ENCODE measurements at regions of chr6 and their contacts with region 1.

Region 1: DNA sequence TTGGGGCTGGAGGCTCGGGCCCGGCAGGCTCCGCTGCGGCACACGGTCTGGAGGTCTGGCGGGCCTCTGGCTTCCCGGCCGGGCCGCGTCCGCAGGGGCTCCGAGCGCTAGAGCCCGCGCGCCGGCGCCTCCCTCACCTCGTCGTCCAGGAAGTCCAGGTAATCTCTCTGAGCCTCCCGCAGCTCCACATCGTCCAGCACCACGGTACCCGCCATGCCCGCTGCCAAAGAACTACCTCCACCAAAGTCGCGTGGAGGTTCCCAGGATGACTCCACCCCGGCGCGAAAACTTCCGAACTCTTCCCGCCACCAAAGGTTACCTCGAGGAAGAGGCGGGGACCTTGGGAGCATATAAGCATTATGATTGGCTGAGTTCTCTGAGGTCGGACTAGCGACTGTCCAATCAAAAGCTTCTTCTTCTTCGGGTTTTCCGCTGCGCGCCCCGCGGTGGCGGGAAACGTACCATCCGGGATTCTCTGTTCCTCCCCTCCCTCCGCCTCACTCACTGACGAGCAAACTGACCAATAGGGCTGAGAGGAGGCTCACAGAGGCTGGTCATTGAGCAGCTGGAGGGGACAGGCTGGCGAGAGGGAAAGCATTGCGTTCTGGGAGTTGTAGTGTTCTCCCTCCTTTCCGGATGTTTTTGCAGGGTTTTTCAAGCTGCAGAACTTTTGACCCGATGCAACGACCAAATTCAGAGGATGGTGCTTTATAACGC is at the start of gene MCM3:
- DNase-seq: peak; percentile 100
- ATAC-seq: peak; percentile 96
- H3K4me3 ChIP-seq: peak within 1 kb of the TSS; percentile 79
- H3K27ac ChIP-seq: peak within 1 kb of the TSS; percentile 81
- H3K4me1 ChIP-seq: peaks cover 8% of the 10 kb centered on the region; the same call in 1 of the 2 replicates
- H3K27me3 ChIP-seq: no peaks in the 10 kb centered on the region
- CTCF ChIP-seq: peak; percentile 1 to 26 (median 3); a peak in 2 of 6 replicates
- EP300 ChIP-seq: no peak
- POLR2A ChIP-seq: peak; percentile 88
- RAD21 ChIP-seq: no peak
- polyA plus RNA-seq, gene MCM3: 74.1 to 96.3 TPM

Region 2: DNA sequence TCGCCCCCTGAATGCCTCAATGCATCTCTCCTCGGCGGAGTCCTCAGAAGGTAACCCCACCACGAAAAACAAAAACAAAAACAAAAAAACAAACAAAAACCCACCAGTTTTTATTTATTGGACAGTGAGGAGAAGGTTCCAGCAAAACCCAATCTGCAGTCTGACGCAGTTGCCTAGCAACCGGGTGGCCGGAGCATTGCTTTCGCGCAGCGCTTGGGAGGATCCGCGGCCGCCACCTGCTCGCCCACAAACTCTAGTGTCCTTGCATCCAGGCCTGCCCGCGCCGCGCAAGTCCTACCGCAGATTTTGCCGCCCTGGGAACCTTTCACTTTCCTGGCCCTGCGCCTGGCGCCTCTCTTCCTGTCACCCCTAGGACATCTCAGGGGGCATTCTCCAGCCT is 1448.4 kb before region 1 on chr6:
- CTCF ChIA-PET with region 1: no interaction called
- POLR2A ChIA-PET with region 1: no interaction called
- RAD21 ChIA-PET with region 1: no interaction called
- SMC1A ChIA-PET with region 1: no interaction called
- in situ Hi-C with region 1: no loop called
- intact Hi-C with region 1: no loop called
- DNase-seq: no peak
- ATAC-seq: no peak
- H3K4me3 ChIP-seq: no peak overlapping the region
- H3K27ac ChIP-seq: no peak overlapping the region
- H3K4me1 ChIP-seq: no peaks in the 10 kb centered on the region
- H3K27me3 ChIP-seq: peaks cover 0 to 10% of the 10 kb centered on the region in 2 experiments; a peak in 1 of 4 replicates
- CTCF ChIP-seq: no peak
- EP300 ChIP-seq: no peak
- POLR2A ChIP-seq: no peak
- RAD21 ChIP-seq: no peak

Region 3: GRCh38 chr6:51147756-51148155 is 1136.9 kb before region 1 on chr6:
- CTCF ChIA-PET with region 1: no interaction called
- POLR2A ChIA-PET with region 1: no interaction called
- RAD21 ChIA-PET with region 1: no interaction called
- SMC1A ChIA-PET with region 1: no interaction called
- in situ Hi-C with region 1: no loop called
- intact Hi-C with region 1: no loop called
- DNase-seq: no peak
- ATAC-seq: no peak
- H3K4me3 ChIP-seq: no peak overlapping the region
- H3K27ac ChIP-seq: no peak overlapping the region
- H3K4me1 ChIP-seq: no peaks in the 10 kb centered on the region
- H3K27me3 ChIP-seq: no peaks in the 10 kb centered on the region
- CTCF ChIP-seq: no peak
- EP300 ChIP-seq: no peak
- POLR2A ChIP-seq: no peak
- RAD21 ChIP-seq: no peak

Region 4: GRCh38 chr6:52009466-52010140 is 275.0 kb before region 1 on chr6:
- CTCF ChIA-PET with region 1: no interaction called
- POLR2A ChIA-PET with region 1: no interaction called
- RAD21 ChIA-PET with region 1: no interaction called
- SMC1A ChIA-PET with region 1: no interaction called
- in situ Hi-C with region 1: no loop called
- intact Hi-C with region 1: no loop called
- DNase-seq: no peak
- ATAC-seq: no peak
- H3K4me3 ChIP-seq: no peak overlapping the region
- H3K27ac ChIP-seq: no peak overlapping the region
- H3K4me1 ChIP-seq: no peaks in the 10 kb centered on the region
- H3K27me3 ChIP-seq: no peaks in the 10 kb centered on the region
- CTCF ChIP-seq: no peak
- EP300 ChIP-seq: no peak
- POLR2A ChIP-seq: no peak
- RAD21 ChIP-seq: no peak

Region 5: DNA sequence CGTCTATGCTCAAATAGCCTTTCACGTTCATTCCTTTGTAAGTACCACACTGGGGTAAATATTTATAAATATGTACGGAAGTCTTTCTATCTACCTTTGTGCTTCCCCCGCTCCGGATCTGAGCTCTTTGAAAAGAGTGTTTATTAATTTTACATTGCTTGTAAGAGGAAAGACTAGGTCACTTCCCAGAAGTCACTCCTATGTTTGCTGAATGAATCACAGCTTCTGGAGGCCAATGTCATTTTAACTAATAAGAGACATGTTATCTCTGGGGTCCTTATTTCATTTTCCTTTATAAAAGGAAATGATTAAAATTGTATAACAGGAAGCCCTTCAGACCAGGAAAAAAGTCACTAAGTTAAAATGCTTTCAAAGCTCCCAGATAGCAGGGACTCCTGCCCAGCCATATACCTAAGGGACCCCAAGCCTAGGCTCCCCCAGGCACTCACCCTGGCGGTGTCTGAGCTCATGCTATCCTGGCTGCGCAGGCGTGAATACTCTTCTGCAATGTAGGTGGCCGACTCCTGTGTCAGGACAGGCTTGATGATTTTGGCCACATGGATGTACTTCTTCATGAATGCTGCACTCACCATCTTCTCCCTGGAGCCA is 12.7 kb before region 1 on chr6:
- CTCF ChIA-PET with region 1: interaction called, 7 read pairs
- POLR2A ChIA-PET with region 1: interaction called, 5 read pairs
- RAD21 ChIA-PET with region 1: interaction called, 3 read pairs
- SMC1A ChIA-PET with region 1: interaction called, 11 read pairs
- in situ Hi-C with region 1: no loop called
- intact Hi-C with region 1: no loop called
- DNase-seq: no peak
- ATAC-seq: no peak
- H3K4me3 ChIP-seq: no peak overlapping the region
- H3K27ac ChIP-seq: no peak overlapping the region
- H3K4me1 ChIP-seq: no peaks in the 10 kb centered on the region
- H3K27me3 ChIP-seq: no peaks in the 10 kb centered on the region
- CTCF ChIP-seq: no peak
- EP300 ChIP-seq: no peak
- POLR2A ChIP-seq: no peak; the same call in 1 of the 2 replicates
- RAD21 ChIP-seq: no peak

Region 6: DNA sequence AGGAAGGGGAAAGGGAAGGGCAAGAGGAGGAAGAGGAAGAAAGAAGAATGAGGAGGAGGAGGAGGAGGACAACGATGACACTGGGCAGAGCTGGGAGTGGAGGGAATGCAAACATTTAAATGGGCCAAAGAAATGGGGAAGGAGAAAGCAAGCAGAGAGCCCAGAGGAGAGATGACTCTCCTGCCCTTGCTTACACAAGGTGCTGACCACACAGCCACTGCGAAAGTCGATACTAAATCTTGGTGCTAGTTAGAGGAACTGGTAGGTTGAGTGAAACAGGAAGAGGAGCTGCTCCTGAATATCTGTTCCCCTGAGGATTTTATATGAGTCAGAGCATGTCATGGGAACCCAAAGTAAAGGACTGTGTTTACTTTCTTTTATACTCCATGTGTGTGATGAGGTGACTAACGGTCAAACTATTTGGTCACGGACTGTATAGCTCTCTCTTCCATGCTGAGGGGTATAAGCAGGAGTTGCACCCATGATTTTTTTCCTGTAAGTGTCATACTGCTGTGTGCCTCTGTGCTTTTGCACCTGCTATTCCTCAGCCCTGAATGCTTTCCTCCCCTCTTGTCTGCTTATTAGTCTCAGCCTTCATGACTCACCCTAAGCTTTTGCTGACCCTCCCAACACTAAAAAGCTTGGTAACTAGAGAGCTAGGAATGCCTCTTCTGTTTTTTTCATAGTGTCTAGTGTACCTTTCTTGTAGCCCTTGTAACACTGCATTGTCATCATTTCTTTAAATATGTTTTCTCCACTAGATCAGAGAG is 67.8 kb after region 1 on chr6:
- CTCF ChIA-PET with region 1: interaction called, 29 read pairs
- POLR2A ChIA-PET with region 1: interaction called, 4 read pairs
- RAD21 ChIA-PET with region 1: interaction called, 24 read pairs
- SMC1A ChIA-PET with region 1: interaction called, 29 read pairs
- in situ Hi-C with region 1: no loop called
- intact Hi-C with region 1: no loop called
- DNase-seq: peak; percentile 79
- ATAC-seq: peak; percentile 93
- H3K4me3 ChIP-seq: no peak overlapping the region
- H3K27ac ChIP-seq: peak overlapping the region; percentile 6; the same call in 1 of the 2 replicates
- H3K4me1 ChIP-seq: peaks cover 32% of the 10 kb centered on the region
- H3K27me3 ChIP-seq: no peaks in the 10 kb centered on the region
- CTCF ChIP-seq: no peak
- EP300 ChIP-seq: peak; percentile 22 to 66; a peak in 1 of 4 replicates
- POLR2A ChIP-seq: no peak
- RAD21 ChIP-seq: no peak

Region 7: DNA sequence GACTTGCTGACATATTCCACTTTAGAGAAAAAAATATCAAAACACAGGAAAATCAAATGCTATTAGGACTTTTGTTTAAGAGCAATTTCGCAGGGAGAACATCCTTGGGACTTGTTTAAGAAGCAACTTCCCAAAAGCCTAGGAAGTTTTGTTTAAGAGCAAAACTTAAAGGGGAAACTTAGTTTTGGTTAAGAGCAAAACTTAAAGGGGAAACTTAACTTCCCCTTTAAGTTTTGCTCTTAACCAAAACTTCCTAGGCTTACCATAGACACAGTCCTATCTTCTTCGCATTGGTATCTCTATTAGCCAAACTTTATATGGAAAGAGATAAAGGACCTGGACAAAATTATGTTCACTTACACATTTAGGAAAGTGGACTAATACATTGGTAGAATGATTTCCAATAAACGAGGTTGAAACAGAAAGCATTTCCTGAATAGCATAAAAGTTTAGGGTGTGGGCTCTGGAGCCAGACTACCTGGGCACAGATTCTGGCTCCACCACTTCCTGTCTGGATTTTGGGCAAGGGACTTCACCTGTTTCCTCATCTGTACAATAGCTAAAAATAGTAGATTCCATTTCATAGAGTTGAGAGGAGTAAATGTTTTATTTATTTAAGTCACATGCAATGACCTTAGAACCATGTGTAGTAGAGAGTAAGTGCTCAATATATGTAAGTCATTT is 93.1 kb after region 1 on chr6:
- CTCF ChIA-PET with region 1: interaction called, 13 read pairs
- POLR2A ChIA-PET with region 1: interaction called, 4 read pairs
- RAD21 ChIA-PET with region 1: interaction called, 4 read pairs
- SMC1A ChIA-PET with region 1: interaction called, 24 read pairs
- in situ Hi-C with region 1: no loop called
- intact Hi-C with region 1: no loop called
- DNase-seq: no peak
- ATAC-seq: peak; percentile 67
- H3K4me3 ChIP-seq: peak overlapping the region; percentile 3; the same call in 1 of the 2 replicates
- H3K27ac ChIP-seq: peak overlapping the region; percentile 24; the same call in 1 of the 2 replicates
- H3K4me1 ChIP-seq: peaks cover 26% of the 10 kb centered on the region
- H3K27me3 ChIP-seq: no peaks in the 10 kb centered on the region
- CTCF ChIP-seq: no peak
- EP300 ChIP-seq: no peak
- POLR2A ChIP-seq: no peak
- RAD21 ChIP-seq: no peak

Region 8: GRCh38 chr6:52407467-52407866 is 122.8 kb after region 1 on chr6:
- CTCF ChIA-PET with region 1: interaction called, 441 read pairs
- POLR2A ChIA-PET with region 1: interaction called, 3 read pairs
- RAD21 ChIA-PET with region 1: interaction called, 224 read pairs
- SMC1A ChIA-PET with region 1: interaction called, 358 read pairs
- in situ Hi-C with region 1: no loop called
- intact Hi-C with region 1: no loop called
- DNase-seq: no peak
- ATAC-seq: peak; percentile 91
- H3K4me3 ChIP-seq: no peak overlapping the region
- H3K27ac ChIP-seq: no peak overlapping the region
- H3K4me1 ChIP-seq: no peaks in the 10 kb centered on the region
- H3K27me3 ChIP-seq: no peaks in the 10 kb centered on the region
- CTCF ChIP-seq: peak; percentile 50 to 59 (median 57); a peak in 5 of 6 replicates
- EP300 ChIP-seq: no peak
- POLR2A ChIP-seq: no peak
- RAD21 ChIP-seq: peak; percentile 70

Region 9: DNA sequence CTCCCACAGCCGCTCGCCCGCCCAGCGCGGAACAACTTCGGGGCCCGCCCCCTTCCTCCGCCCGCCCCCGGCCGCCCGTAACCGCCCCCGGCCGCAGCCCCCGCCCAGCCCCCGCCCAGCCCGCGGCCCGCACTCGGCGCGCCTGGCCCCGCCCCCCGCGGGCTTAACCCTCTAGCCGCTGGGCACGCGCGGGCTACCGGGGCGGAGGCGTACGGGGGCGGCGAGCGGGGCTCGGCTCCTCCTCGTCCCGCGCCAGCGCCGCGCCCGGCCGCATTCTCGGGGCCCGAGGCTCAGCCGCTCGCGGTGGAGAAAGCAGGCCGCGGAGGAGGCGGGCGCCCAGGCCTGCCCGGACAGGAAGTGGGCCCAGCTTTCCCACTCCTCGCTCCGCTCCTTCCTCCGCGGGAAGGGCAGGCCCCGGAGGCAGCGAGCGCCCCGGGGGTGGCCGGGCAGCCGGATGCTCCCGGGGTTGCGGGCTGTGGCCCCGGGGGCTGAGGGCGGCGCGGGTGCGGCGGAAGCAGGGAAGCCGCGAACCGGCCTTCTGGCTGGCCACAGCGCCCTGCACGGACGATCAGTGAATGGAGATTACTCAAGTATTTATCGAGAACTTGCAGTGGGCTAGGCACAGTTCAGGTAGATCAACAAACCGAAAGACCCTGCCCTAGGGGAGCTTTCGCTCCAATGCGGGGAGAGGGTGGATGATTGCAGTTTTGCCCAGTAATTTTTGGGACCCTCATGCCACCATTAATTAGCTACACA is 292.6 kb after region 1 on chr6 and contains the start of gene TRAM2:
- CTCF ChIA-PET with region 1: no interaction called
- POLR2A ChIA-PET with region 1: no interaction called
- RAD21 ChIA-PET with region 1: interaction called, 6 read pairs
- SMC1A ChIA-PET with region 1: interaction called, 3 read pairs
- in situ Hi-C with region 1: loop called (anchors 10 kb)
- intact Hi-C with region 1: no loop called
- DNase-seq: no peak
- ATAC-seq: peak; percentile 73
- H3K4me3 ChIP-seq: peak within 1 kb of the TSS; percentile 81
- H3K27ac ChIP-seq: peak within 1 kb of the TSS; percentile 86
- H3K4me1 ChIP-seq: peaks cover 30% of the 10 kb centered on the region
- H3K27me3 ChIP-seq: no peaks in the 10 kb centered on the region
- CTCF ChIP-seq: no peak
- EP300 ChIP-seq: no peak
- POLR2A ChIP-seq: peak; percentile 83
- RAD21 ChIP-seq: no peak
- polyA plus RNA-seq, gene TRAM2: 2.5 TPM

Region 10: GRCh38 chr6:52995913-52996645 is 711.5 kb after region 1 on chr6:
- CTCF ChIA-PET with region 1: interaction called, 3 read pairs
- POLR2A ChIA-PET with region 1: no interaction called
- RAD21 ChIA-PET with region 1: no interaction called
- SMC1A ChIA-PET with region 1: interaction called, 3 read pairs
- in situ Hi-C with region 1: no loop called
- intact Hi-C with region 1: loop called (anchors 10 kb)
- DNase-seq: peak; percentile 51
- ATAC-seq: peak; percentile 11
- H3K4me3 ChIP-seq: peak overlapping the region; percentile 65
- H3K27ac ChIP-seq: no peak overlapping the region
- H3K4me1 ChIP-seq: no peaks in the 10 kb centered on the region
- H3K27me3 ChIP-seq: no peaks in the 10 kb centered on the region
- CTCF ChIP-seq: no peak
- EP300 ChIP-seq: no peak
- POLR2A ChIP-seq: no peak
- RAD21 ChIP-seq: no peak

Region 11: DNA sequence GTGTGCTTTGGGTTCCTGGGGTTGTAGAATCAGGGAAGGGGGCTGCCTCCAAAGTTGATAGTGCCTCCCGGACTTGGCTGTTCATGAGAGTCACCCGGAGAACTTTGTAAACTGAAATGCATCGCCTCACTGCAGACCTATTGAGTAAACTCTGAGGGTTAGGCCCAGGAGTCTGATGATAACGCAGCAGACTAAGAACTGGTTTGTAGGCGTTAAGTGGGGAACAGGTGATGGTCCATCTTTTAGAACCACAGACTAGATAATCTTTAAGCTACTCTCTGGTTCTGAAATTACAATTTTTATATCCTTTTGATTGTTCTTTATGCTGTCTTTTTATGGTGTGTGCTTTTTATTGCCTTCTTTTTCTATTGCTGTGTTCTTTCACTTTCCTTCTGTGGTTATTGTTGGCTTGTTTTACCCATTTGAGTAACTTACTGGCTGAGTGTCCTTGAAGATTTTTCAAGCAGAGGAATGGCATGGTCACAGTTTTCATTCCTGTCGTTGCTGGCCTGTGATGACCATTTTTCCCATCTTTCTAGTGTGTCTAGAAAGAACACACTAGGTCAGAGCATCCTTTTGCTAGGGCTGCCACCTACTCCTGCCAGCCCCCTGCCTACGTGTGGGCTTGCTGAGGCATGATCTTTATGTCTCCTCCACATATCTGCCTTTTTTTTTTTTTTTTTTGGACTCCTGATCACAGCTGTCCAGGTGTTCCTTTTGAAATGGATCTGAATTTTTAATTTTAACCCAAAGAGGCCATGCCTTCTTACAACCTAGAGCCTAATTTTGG is 1541.1 kb after region 1 on chr6:
- CTCF ChIA-PET with region 1: no interaction called
- POLR2A ChIA-PET with region 1: no interaction called
- RAD21 ChIA-PET with region 1: no interaction called
- SMC1A ChIA-PET with region 1: no interaction called
- in situ Hi-C with region 1: no loop called
- intact Hi-C with region 1: no loop called
- DNase-seq: no peak
- ATAC-seq: peak; percentile 51
- H3K4me3 ChIP-seq: no peak overlapping the region
- H3K27ac ChIP-seq: no peak overlapping the region
- H3K4me1 ChIP-seq: no peaks in the 10 kb centered on the region
- H3K27me3 ChIP-seq: no peaks in the 10 kb centered on the region
- CTCF ChIP-seq: no peak
- EP300 ChIP-seq: no peak
- POLR2A ChIP-seq: no peak
- RAD21 ChIP-seq: no peak

Measured in GM12878 (cell line).